Gastrocnemius medialis (tissue), 4 donors: ENCODE measurements at regions of chr1 and their contacts with region 1.

Region 1: GRCh38 chr1:220272047-220272840 is at the start of gene RAB3GAP2:
- DNase-seq: peak; percentile 84 to 92
- ATAC-seq: peak; percentile 98 to 99
- H3K4me3 ChIP-seq: peak within 1 kb of the TSS; percentile 88 to 96 (median 90)
- H3K27ac ChIP-seq: peak within 1 kb of the TSS; percentile 80 to 87 (median 87)
- H3K4me1 ChIP-seq: peaks cover 9 to 29% of the 10 kb centered on the region in 2 donors
- H3K27me3 ChIP-seq: no peaks in the 10 kb centered on the region
- CTCF ChIP-seq: peak in 2 of 5 experiments; percentile 20 to 37
- POLR2A ChIP-seq: peak; percentile 66 to 67
- total RNA-seq, gene RAB3GAP2: 16.5 to 24.2 (median 18.0) TPM

Region 2: DNA sequence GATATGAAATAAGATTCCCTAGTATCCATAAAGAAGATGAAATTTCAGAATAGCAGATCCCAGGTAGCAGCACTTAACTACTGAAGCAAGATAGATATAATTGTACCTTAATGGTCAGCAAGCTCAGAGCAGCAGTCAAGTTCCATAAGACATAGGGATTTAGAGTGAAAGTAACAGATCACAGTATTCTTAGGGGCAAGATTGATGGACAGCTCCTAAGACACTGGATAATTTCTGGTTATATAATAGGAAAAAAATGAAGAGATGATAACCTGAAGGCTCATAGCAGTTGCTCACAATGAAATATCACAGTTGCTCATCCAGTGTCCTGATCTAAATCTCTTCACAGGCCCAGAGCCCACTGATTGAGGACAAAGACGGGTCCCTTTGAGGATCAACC is 409.9 kb before region 1 on chr1:
- in situ Hi-C with region 1: no loop called
- intact Hi-C with region 1: no loop called
- DNase-seq: no peak
- ATAC-seq: no peak
- H3K4me3 ChIP-seq: no peak overlapping the region
- H3K27ac ChIP-seq: no peak overlapping the region
- H3K4me1 ChIP-seq: no peaks in the 10 kb centered on the region
- H3K27me3 ChIP-seq: no peaks in the 10 kb centered on the region
- CTCF ChIP-seq: no peak
- POLR2A ChIP-seq: no peak

Region 3: GRCh38 chr1:220089650-220090556 is 182.3 kb before region 1 on chr1 and contains the start of gene BPNT1:
- in situ Hi-C with region 1: no loop called
- intact Hi-C with region 1: loop called (anchors 2 kb)
- DNase-seq: peak; percentile 91 to 94
- ATAC-seq: peak; percentile 85 to 91
- H3K4me3 ChIP-seq: peak within 1 kb of the TSS; percentile 57 to 77 (median 66)
- H3K27ac ChIP-seq: peak within 1 kb of the TSS; percentile 68 to 75 (median 73)
- H3K4me1 ChIP-seq: peaks cover 11 to 13% of the 10 kb centered on the region in 2 donors
- H3K27me3 ChIP-seq: no peaks in the 10 kb centered on the region
- CTCF ChIP-seq: peak in 1 of 5 experiments; percentile 25
- POLR2A ChIP-seq: peak; percentile 17 to 63
- total RNA-seq, gene BPNT1: 5.2 to 27.5 (median 9.2) TPM

Region 4: DNA sequence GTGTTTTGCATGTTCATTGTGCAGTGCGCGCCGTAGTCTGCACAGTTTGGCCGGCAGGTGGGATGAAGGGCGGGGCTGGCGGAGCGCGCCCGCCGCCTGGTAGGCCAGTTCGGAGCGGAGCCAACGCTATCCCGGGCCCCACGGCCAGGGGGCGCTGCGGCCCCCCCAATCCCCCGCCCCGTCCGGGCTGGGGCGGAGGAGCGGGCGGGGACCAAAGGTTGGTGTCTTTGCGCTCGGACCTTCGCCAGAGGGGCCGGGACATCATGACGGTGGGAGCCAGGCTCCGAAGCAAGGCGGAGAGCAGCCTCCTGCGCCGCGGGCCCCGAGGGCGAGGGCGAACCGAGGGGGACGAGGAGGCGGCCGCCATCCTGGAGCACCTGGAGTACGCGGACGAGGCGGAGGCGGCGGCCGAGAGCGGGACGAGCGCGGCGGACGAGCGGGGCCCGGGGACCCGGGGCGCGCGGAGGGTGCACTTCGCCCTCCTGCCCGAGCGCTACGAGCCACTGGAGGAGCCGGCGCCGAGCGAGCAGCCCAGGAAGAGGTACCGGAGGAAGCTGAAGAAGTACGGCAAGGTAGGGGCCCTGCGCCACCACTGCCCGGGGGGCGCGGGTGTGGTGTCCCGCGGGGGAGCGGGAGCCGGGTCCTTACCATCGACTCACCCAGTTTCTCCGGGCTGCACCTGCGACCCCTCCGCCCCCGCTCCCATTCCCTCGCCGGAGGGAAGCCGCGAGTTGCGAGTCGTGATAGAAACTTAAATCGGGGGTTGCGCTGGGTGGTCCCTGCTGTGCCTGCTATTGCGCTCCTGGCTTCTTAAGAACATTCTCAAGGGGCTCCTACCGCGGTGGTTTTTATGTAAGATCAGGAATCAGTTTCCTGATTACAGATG is 418.1 kb after region 1 on chr1 and contains the start of gene C1orf115:
- in situ Hi-C with region 1: no loop called
- intact Hi-C with region 1: loop called (anchors 10 kb)
- DNase-seq: peak; percentile 22 to 66
- ATAC-seq: peak; percentile 89 to 94
- H3K4me3 ChIP-seq: peak within 1 kb of the TSS; percentile 58 to 92 (median 68)
- H3K27ac ChIP-seq: peak within 1 kb of the TSS; percentile 14 to 71 (median 50)
- H3K4me1 ChIP-seq: peaks cover 0 to 10% of the 10 kb centered on the region in 2 donors
- H3K27me3 ChIP-seq: no peaks in the 10 kb centered on the region
- CTCF ChIP-seq: peak; percentile 85 to 96 (median 90)
- POLR2A ChIP-seq: no peak
- total RNA-seq, gene C1orf115: 2.2 to 6.7 (median 4.6) TPM

Region 5: DNA sequence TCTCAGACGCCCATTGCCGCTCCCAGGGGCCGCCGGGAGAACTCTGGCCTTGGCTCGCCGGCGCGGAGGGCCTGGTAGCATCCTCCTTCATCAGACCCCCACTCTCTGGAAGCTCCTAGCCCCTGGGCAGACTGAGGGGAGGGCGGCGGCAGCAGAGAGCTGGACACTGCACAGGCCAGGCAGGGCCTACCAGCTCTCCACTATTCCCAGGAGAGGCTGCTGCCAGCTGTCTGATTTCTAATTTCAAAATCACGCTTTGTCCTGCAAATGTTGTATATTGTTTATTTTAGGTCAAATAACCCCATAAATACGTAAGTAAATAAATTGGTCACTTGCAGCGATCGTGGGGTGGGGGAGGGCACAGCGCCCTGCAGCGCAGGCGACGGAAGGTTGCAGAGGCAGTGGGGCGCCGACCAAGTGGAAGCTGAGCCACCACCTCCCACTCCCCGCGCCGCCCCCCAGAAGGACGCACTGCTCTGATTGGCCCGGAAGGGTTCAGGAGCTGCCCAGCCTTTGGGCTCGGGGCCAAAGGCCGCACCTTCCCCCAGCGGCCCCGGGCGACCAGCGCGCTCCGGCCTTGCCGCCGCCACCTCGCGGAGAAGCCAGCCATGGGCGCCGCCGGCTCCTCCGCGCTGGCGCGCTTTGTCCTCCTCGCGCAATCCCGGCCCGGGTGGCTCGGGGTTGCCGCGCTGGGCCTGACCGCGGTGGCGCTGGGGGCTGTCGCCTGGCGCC is 514.3 kb after region 1 on chr1 and contains the start of gene MTARC1:
- in situ Hi-C with region 1: loop called in 2 of 4 experiments (anchors 25 kb)
- intact Hi-C with region 1: loop called (anchors 10 kb)
- DNase-seq: peak; percentile 23 to 56
- ATAC-seq: peak; percentile 74 to 79
- H3K4me3 ChIP-seq: peak within 1 kb of the TSS; percentile 63 to 78 (median 66)
- H3K27ac ChIP-seq: peak within 1 kb of the TSS; percentile 56 to 76 (median 61)
- H3K4me1 ChIP-seq: peaks cover 14 to 30% of the 10 kb centered on the region in 2 donors
- H3K27me3 ChIP-seq: no peaks in the 10 kb centered on the region
- CTCF ChIP-seq: peak in 2 of 5 experiments; percentile 29 to 48
- POLR2A ChIP-seq: peak in 1 of 2 donors; percentile 20
- total RNA-seq, gene MTARC1: 1.2 to 2.9 (median 1.3) TPM